IMR-90 (cell line): ENCODE measurements at regions of chr6 and their contacts with region 1.

Region 1: DNA sequence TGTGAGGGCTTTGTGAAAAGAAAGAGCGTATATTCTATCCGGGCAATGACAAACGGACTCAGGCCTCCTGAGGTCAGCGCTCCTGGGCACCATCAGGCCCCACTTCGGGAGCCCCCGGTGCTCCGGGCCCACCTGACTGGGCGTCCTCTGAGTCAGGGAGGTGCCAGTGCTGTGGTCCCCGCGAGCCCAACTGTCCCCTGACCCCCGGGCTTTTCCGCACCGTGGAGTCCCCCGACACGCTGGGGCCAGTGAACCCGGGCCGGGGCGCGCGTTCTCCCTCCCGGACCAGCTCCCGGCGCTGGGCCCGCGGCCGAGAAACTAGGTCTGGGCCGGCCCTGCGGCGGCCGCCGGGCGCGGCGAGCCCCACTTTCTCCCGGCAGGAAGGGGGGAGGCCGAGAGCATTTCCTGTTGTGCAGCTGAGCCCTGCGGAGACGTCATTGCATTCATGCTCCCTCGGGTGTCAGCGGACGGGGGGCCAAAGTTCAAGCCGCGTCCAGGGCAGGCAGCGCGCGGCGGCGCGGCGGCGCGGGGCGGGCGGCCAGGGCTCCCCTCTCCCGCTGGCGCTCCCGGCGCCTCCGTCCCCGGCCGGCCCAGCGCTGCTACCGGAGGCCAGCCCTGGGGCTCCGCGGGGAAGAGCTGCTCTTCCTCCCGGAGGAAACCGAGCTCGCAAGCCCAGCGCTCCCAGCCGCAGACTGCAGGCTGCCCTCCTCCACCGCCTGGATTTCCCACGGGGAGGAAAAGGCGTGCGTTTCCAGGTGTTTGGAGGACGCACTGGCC is 18.3 kb downstream of the HIVEP2 start:
- DNase-seq: peak; percentile 90
- ATAC-seq: peak; percentile 90
- H3K4me3 ChIP-seq: peak overlapping the region; percentile 73
- H3K27ac ChIP-seq: peak overlapping the region; percentile 82
- H3K4me1 ChIP-seq: no peaks in the 10 kb centered on the region; the same call in 1 of the 2 replicates
- H3K27me3 ChIP-seq: no peaks in the 10 kb centered on the region
- CTCF ChIP-seq: no peak
- POLR2A ChIP-seq: peak; percentile 72
- RAD21 ChIP-seq: peak; percentile 24; the same call in 1 of the 2 replicates

Region 2: DNA sequence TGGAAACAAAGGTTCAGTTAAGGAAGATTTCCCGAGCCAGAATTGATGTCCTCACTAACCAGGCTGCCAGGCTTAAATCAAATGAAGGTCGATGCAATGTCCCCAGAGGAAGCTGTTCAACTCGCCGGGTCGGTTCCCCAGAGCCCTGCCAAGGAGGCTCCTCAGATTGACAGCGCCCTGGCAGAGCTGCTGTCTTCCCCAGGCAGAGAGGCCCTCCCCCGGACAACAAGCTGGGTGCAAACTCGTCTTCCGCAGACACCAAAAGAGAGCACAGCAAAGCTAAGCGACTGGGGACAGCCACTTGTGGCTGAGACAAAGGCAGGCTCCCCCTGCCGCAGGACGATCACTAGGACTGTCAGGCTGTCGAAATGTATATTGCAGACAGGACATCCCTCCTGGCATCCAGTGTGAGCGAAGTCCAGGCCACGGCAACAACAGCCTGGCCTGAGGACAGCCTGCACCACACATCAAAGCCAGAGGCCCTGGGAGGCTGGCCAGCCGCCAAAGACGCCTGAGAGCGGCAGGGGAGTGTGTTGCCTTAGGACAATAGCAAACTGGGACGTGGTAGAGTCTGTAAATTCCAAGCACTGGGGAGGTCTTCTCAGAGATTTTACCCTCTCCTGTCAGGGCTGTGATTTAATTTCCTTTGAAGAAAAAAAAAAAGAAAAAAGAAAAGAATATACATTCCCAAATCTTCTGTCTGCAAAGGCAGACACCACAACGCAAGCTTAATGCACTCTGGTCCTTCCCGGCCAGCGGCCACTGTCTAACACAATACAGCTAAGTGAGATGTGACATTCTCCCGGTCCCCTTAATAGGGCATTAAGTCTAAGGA is 80.8 kb before region 1 on chr6:
- CTCF ChIA-PET with region 1: no interaction called
- POLR2A ChIA-PET with region 1: no interaction called
- dilution Hi-C with region 1: no loop called
- in situ Hi-C with region 1: no loop called
- intact Hi-C with region 1: loop called (anchors 5 kb)
- DNase-seq: peak; percentile 70
- ATAC-seq: peak; percentile 53
- H3K4me3 ChIP-seq: peak overlapping the region; percentile 2; the same call in 1 of the 2 replicates
- H3K27ac ChIP-seq: peak overlapping the region; percentile 85
- H3K4me1 ChIP-seq: peaks cover 20% of the 10 kb centered on the region
- H3K27me3 ChIP-seq: no peaks in the 10 kb centered on the region
- CTCF ChIP-seq: no peak
- POLR2A ChIP-seq: peak; percentile 0; the same call in 1 of the 2 replicates
- RAD21 ChIP-seq: no peak

Region 3: DNA sequence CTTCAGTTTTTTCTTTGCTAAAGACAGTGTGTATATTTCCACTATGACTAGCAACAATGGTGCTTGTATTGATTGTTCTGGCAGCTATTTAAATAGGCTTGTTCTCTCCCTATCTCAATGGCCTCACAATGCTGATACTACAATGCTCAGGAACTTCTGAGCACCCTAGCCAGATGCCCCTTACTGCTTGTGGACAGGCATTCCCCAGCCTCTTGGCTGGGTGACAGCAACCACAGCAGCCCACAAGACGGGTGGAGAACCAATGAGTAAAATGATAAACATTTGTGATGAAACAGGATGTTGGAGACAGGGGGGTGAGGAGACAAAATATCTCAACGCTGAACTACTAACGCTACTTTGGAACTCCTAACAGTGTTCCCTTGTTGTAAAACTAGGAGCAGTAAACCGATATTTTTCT is 24.0 kb before region 1 on chr6:
- CTCF ChIA-PET with region 1: no interaction called
- POLR2A ChIA-PET with region 1: no interaction called
- dilution Hi-C with region 1: no loop called
- in situ Hi-C with region 1: no loop called
- intact Hi-C with region 1: loop called (anchors 1 kb)
- DNase-seq: peak; percentile 99
- ATAC-seq: peak; percentile 88
- H3K4me3 ChIP-seq: no peak overlapping the region
- H3K27ac ChIP-seq: no peak overlapping the region
- H3K4me1 ChIP-seq: peaks cover 19% of the 10 kb centered on the region
- H3K27me3 ChIP-seq: no peaks in the 10 kb centered on the region
- CTCF ChIP-seq: no peak
- POLR2A ChIP-seq: peak; percentile 78; the same call in 1 of the 2 replicates
- RAD21 ChIP-seq: peak; percentile 28; the same call in 1 of the 2 replicates